Psoas muscle (tissue), 8 donors: ENCODE measurements at regions of chr12 and their contacts with region 1.

Region 1: GRCh38 chr12:66061557-66062289 is 68.8 kb downstream of the LLPH start:
- DNase-seq: no peak
- ATAC-seq: no peak
- H3K4me3 ChIP-seq: no peak overlapping the region
- H3K27ac ChIP-seq: no peak overlapping the region
- H3K4me1 ChIP-seq: no peaks in the 10 kb centered on the region
- H3K27me3 ChIP-seq: peaks cover 0 to 2% (median 0%) of the 10 kb centered on the region in 3 donors
- CTCF ChIP-seq: no peak

Region 2: GRCh38 chr12:65977384-65977783 is 84.3 kb before region 1 on chr12:
- intact Hi-C with region 1: no loop called
- DNase-seq: no peak
- ATAC-seq: no peak
- H3K4me3 ChIP-seq: no peak overlapping the region
- H3K27ac ChIP-seq: no peak overlapping the region
- H3K4me1 ChIP-seq: no peaks in the 10 kb centered on the region
- H3K27me3 ChIP-seq: no peaks in the 10 kb centered on the region
- CTCF ChIP-seq: no peak

Region 3: DNA sequence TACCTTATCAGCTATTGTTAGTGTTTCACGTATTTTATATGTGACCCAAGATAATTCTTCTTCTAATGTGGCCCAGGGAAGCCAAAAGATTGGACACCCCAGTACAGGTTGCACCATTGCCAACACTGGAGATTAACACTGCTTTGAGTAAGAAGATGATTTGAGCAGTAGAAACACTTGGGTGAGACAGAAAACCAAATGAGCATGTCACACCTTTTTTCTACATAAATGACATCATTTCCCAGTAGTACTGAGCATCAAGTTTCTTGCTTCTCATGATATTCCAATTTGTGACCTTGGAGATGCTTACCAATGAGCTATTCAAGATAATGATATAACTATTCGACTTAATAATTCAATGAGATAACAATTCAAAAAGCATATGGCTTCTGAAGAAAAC is 71.1 kb before region 1 on chr12:
- intact Hi-C with region 1: no loop called
- DNase-seq: no peak
- ATAC-seq: no peak
- H3K4me3 ChIP-seq: no peak overlapping the region
- H3K27ac ChIP-seq: no peak overlapping the region
- H3K4me1 ChIP-seq: no peaks in the 10 kb centered on the region
- H3K27me3 ChIP-seq: no peaks in the 10 kb centered on the region
- CTCF ChIP-seq: no peak

Region 4: DNA sequence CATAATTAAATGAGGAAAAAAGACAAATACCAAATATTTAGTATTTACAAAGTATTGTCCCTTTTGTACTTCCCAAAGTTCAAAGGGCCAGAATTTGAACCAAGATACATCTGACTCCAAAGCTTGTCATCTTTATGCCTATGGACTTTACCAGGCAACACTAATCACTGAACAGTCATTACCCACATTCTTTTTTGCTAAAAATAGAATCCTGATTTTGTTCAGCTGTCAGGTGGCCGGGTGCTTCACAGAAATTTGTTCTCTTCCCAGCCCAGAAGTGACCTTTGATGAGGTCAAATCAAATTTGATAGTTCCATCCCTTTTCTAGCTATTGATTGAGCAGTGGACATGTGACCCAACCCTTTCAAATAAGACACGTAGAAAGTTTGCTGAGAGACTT is 52.7 kb before region 1 on chr12:
- intact Hi-C with region 1: loop called in 1 of 2 experiments (anchors 5 kb)
- DNase-seq: no peak
- ATAC-seq: no peak
- H3K4me3 ChIP-seq: no peak overlapping the region
- H3K27ac ChIP-seq: no peak overlapping the region
- H3K4me1 ChIP-seq: no peaks in the 10 kb centered on the region
- H3K27me3 ChIP-seq: no peaks in the 10 kb centered on the region
- CTCF ChIP-seq: no peak

Region 5: DNA sequence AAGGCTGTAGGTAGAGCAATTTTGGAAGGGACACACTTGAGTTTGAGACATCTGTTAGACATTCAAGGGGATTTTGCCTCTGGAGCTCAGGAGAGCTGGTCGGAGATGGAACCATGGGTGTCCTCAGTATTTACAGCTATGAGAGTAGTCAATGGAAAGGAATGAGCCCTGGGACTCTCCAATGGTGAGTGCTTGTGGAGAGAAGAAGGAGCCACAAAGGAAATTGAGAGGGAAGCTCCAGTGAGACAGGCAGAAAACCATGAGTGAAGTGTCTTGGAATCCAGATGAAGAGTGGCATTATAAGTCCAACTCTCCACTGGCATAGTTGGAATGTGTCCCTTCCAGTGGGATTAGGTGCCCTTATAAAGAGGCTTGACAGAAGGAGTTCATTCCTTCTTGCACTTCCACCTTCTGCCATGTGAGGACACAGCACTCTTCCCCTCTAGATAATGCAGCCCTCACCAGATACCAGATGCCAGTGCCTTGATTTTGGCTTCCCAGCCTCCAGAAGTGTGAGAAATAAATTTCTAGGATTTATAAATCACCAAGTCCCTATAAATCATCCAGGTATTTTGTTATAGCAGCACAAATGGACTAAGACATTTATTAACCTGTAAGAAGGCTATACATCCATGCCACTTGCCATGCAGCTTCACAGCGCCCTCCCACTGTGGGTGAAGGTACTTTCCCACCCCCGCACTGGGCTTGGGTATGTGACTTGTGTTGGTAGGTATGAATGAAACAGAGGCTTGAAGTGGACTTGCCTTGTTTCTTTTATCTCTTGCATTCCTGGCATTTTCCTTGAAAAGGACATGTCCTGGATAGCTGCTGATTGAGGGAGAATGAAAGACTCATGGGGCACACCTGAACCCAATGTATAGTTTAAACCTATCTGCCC is 41.5 kb after region 1 on chr12:
- intact Hi-C with region 1: no loop called
- DNase-seq: no peak
- ATAC-seq: no peak
- H3K4me3 ChIP-seq: no peak overlapping the region
- H3K27ac ChIP-seq: no peak overlapping the region
- H3K4me1 ChIP-seq: no peaks in the 10 kb centered on the region
- H3K27me3 ChIP-seq: peaks cover 0 to 4% (median 0%) of the 10 kb centered on the region in 3 donors
- CTCF ChIP-seq: no peak

Region 6: DNA sequence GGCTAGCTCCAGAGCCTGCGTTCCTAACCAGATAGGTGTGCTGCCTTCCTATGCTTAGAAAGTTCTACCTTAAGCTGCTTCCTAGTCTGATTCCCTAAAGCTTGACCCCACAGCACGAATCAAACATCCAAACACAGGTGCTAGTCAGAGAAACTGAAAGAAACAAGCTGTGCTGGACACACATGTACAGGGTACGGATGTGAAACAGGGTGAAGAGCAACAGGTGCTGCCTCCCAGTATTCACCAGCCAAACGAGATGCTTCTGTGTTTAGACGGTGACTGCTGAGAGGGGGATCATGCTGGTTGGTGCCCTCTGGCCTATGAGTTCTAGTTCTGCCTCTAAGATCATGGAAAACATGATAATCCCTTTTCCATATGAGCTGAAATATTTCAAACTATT is 511.9 kb after region 1 on chr12:
- intact Hi-C with region 1: no loop called
- DNase-seq: no peak
- ATAC-seq: no peak
- H3K4me3 ChIP-seq: no peak overlapping the region
- H3K27ac ChIP-seq: no peak overlapping the region
- H3K4me1 ChIP-seq: no peaks in the 10 kb centered on the region
- H3K27me3 ChIP-seq: no peaks in the 10 kb centered on the region
- CTCF ChIP-seq: no peak